ENCODE measurements at regions of chr19 and their contacts with region 1.

Region 1: GRCh38 chr19:14136509-14137281 is at the start of gene ASF1B:
- DNase-seq: peak; percentile 91 to 99 (median 97)
- ATAC-seq: peak; percentile 80
- H3K4me3 ChIP-seq: peak within 1 kb of the TSS; percentile 86
- H3K4me3 Mint-ChIP-seq: peak within 1 kb of the TSS; percentile 97
- H3K27ac ChIP-seq: peak within 1 kb of the TSS; percentile 92 to 94
- H3K27ac Mint-ChIP-seq: peak within 1 kb of the TSS; percentile 87
- H3K4me1 ChIP-seq: peaks cover 34% of the 10 kb centered on the region
- H3K4me1 Mint-ChIP-seq: peaks cover 34% of the 10 kb centered on the region
- H3K27me3 ChIP-seq: no peaks in the 10 kb centered on the region
- H3K27me3 Mint-ChIP-seq: no peaks in the 10 kb centered on the region
- CTCF ChIP-seq: peak; percentile 99
- total RNA-seq, gene ASF1B: 0.59 to 0.77 TPM

Region 2: DNA sequence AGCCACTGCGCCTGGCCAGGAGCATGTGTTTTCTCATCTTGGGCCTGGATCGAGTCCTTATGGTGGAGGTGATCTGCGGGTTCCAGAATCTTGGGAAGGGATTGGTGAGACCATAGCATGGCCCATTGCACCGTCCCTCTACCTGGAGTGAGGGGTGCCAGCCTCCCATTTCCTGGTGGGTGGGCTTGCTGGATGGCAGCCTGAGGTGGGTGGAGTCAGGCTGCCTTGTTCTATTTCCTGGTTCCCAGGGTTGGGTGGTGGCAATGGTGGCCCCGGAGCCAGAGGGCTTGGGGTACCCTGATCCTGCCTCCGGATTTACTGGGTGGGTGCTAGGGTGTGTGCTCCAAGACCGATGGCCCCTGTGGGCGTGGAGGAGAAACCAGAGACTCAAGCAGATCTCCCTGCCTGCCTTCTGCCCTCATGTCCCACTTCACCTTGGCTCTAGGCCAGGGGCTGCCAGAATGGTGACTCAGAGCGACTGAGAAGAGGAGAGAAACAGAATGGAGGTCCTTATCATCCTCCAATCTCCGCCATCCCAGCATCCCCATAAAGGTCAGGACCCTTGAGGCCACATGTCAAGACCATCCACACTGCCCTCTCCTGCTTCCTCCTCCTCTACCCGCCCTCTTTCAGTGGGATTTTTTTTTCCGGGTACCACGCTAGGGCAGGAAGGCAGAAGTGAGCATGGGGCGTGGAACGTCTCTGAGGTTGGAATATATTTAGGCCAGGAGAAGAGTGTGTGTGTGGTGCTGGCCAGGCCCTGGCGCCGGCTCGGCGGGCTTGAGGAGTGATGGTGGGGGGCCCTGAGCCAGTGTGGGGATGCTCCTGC is 964.4 kb before region 1 on chr19:
- CTCF ChIA-PET with region 1: no interaction called
- POLR2A ChIA-PET with region 1: no interaction called
- intact Hi-C with region 1: no loop called
- DNase-seq: peak; percentile 49 to 88 (median 84)
- ATAC-seq: peak; percentile 24
- H3K4me3 ChIP-seq: peak overlapping the region; percentile 47
- H3K4me3 Mint-ChIP-seq: peak overlapping the region; percentile 87
- H3K27ac ChIP-seq: peak overlapping the region; percentile 65 to 83
- H3K27ac Mint-ChIP-seq: peak overlapping the region; percentile 99
- H3K4me1 ChIP-seq: peaks cover 85% of the 10 kb centered on the region
- H3K4me1 Mint-ChIP-seq: peaks cover 64% of the 10 kb centered on the region
- H3K27me3 ChIP-seq: no peaks in the 10 kb centered on the region
- H3K27me3 Mint-ChIP-seq: no peaks in the 10 kb centered on the region
- CTCF ChIP-seq: no peak

Region 3: GRCh38 chr19:14073261-14073924 is 63.3 kb before region 1 on chr19:
- CTCF ChIA-PET with region 1: interaction called, 19 read pairs
- POLR2A ChIA-PET with region 1: interaction called, 22 read pairs
- intact Hi-C with region 1: loop called in 1 of 2 experiments (anchors 2 kb)
- DNase-seq: peak; percentile 55 to 92 (median 72)
- ATAC-seq: peak; percentile 79
- H3K4me3 ChIP-seq: peak overlapping the region; percentile 77
- H3K4me3 Mint-ChIP-seq: peak overlapping the region; percentile 93
- H3K27ac ChIP-seq: no peak overlapping the region
- H3K27ac Mint-ChIP-seq: peak overlapping the region; percentile 83
- H3K4me1 ChIP-seq: peaks cover 38% of the 10 kb centered on the region
- H3K4me1 Mint-ChIP-seq: peaks cover 17% of the 10 kb centered on the region
- H3K27me3 ChIP-seq: peaks cover 4 to 5% of the 10 kb centered on the region in 2 experiments
- H3K27me3 Mint-ChIP-seq: peaks cover 4% of the 10 kb centered on the region
- CTCF ChIP-seq: no peak

Region 4: GRCh38 chr19:14147797-14148605 is 11.3 kb after region 1 on chr19:
- CTCF ChIA-PET with region 1: interaction called, 11 read pairs
- POLR2A ChIA-PET with region 1: interaction called, 52 read pairs
- intact Hi-C with region 1: loop called in 1 of 2 experiments (anchors 1 kb)
- DNase-seq: peak; percentile 36 to 75 (median 53)
- ATAC-seq: peak; percentile 55
- H3K4me3 ChIP-seq: no peak overlapping the region
- H3K4me3 Mint-ChIP-seq: peak overlapping the region; percentile 57
- H3K27ac ChIP-seq: peak overlapping the region; percentile 84 to 94
- H3K27ac Mint-ChIP-seq: peak overlapping the region; percentile 99
- H3K4me1 ChIP-seq: peaks cover 40% of the 10 kb centered on the region
- H3K4me1 Mint-ChIP-seq: peaks cover 41% of the 10 kb centered on the region
- H3K27me3 ChIP-seq: no peaks in the 10 kb centered on the region
- H3K27me3 Mint-ChIP-seq: no peaks in the 10 kb centered on the region
- CTCF ChIP-seq: peak; percentile 70

Region 5: GRCh38 chr19:14354445-14354844 is 217.8 kb after region 1 on chr19:
- CTCF ChIA-PET with region 1: interaction called, 4 read pairs
- POLR2A ChIA-PET with region 1: interaction called, 10 read pairs
- intact Hi-C with region 1: no loop called
- DNase-seq: peak in 1 of 14 experiments; percentile 46
- ATAC-seq: no peak
- H3K4me3 ChIP-seq: no peak overlapping the region
- H3K4me3 Mint-ChIP-seq: no peak overlapping the region
- H3K27ac ChIP-seq: no peak overlapping the region
- H3K27ac Mint-ChIP-seq: peak overlapping the region; percentile 70
- H3K4me1 ChIP-seq: peaks cover 60% of the 10 kb centered on the region
- H3K4me1 Mint-ChIP-seq: peaks cover 37% of the 10 kb centered on the region
- H3K27me3 ChIP-seq: no peaks in the 10 kb centered on the region
- H3K27me3 Mint-ChIP-seq: no peaks in the 10 kb centered on the region
- CTCF ChIP-seq: no peak

Region 6: DNA sequence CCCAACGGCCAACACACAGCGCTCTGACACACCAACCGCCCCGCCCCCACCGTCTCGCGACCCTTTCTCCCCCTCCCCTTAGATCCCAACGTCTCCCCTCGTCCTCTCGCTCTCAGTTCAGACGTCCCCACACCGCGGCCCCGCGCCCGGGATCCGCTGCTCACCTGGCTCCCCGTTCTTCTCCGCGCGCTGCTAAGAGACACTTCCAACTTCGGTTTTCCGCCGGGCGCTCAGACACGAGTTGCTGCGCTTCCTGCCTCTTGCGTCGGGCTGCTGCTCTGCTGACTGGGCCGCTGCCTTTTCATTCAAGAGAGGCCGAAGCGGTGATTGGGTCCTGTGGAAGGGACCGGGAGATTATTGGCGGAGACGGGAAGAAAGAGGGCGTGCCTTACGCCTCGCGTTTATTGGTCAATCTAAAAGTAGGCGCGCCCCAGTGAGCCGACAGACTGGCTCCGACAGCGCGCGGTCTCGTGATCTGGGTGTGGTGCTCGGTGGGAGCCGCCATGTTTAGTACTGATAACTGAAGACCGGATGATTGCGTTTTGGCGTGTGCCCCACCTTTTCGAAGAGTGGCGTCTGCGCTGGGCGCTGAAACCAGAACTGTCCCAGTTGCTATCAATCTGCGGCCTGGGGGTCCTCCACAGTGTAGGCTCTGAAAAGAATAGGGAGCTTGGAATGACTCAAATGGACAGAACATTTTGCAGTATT is 282.6 kb after region 1 on chr19 and contains the start of gene DDX39A:
- CTCF ChIA-PET with region 1: interaction called, 8 read pairs
- POLR2A ChIA-PET with region 1: interaction called, 7 read pairs
- intact Hi-C with region 1: loop called in 1 of 2 experiments (anchors 2 kb)
- DNase-seq: peak; percentile 92 to 99 (median 94)
- ATAC-seq: peak; percentile 84
- H3K4me3 ChIP-seq: peak within 1 kb of the TSS; percentile 88
- H3K4me3 Mint-ChIP-seq: peak within 1 kb of the TSS; percentile 95
- H3K27ac ChIP-seq: peak within 1 kb of the TSS; percentile 95 to 97
- H3K27ac Mint-ChIP-seq: peak within 1 kb of the TSS; percentile 95
- H3K4me1 ChIP-seq: peaks cover 54% of the 10 kb centered on the region
- H3K4me1 Mint-ChIP-seq: peaks cover 42% of the 10 kb centered on the region
- H3K27me3 ChIP-seq: no peaks in the 10 kb centered on the region
- H3K27me3 Mint-ChIP-seq: no peaks in the 10 kb centered on the region
- CTCF ChIP-seq: no peak
- total RNA-seq, gene DDX39A: 296 to 299 TPM

Measured in CD4-positive, alpha-beta T cell (primary cell).